ENCODE measurements at regions of chr17 and their contacts with region 1.

Region 1: GRCh38 chr17:19867064-19867313 is 747 bp downstream of the ULK2 start:
- DNase-seq: peak; percentile 71
- H3K4me3 ChIP-seq: peak overlapping the region; percentile 87 to 97 (median 95)
- H3K27ac ChIP-seq: peak overlapping the region; percentile 64
- H3K4me1 ChIP-seq: peaks cover 6% of the 10 kb centered on the region
- H3K27me3 ChIP-seq: no peaks in the 10 kb centered on the region
- CTCF ChIP-seq: peak; percentile 10 to 46
- POLR2A ChIP-seq: no peak

Region 2: GRCh38 chr17:19904924-19905323 is 37.9 kb after region 1 on chr17:
- CTCF ChIA-PET with region 1: no interaction called
- POLR2A ChIA-PET with region 1: no interaction called
- dilution Hi-C with region 1: no loop called
- intact Hi-C with region 1: loop called (anchors 5 kb)
- DNase-seq: no peak
- H3K4me3 ChIP-seq: no peak overlapping the region
- H3K27ac ChIP-seq: no peak overlapping the region
- H3K4me1 ChIP-seq: no peaks in the 10 kb centered on the region
- H3K27me3 ChIP-seq: no peaks in the 10 kb centered on the region
- CTCF ChIP-seq: no peak
- POLR2A ChIP-seq: no peak

Region 3: DNA sequence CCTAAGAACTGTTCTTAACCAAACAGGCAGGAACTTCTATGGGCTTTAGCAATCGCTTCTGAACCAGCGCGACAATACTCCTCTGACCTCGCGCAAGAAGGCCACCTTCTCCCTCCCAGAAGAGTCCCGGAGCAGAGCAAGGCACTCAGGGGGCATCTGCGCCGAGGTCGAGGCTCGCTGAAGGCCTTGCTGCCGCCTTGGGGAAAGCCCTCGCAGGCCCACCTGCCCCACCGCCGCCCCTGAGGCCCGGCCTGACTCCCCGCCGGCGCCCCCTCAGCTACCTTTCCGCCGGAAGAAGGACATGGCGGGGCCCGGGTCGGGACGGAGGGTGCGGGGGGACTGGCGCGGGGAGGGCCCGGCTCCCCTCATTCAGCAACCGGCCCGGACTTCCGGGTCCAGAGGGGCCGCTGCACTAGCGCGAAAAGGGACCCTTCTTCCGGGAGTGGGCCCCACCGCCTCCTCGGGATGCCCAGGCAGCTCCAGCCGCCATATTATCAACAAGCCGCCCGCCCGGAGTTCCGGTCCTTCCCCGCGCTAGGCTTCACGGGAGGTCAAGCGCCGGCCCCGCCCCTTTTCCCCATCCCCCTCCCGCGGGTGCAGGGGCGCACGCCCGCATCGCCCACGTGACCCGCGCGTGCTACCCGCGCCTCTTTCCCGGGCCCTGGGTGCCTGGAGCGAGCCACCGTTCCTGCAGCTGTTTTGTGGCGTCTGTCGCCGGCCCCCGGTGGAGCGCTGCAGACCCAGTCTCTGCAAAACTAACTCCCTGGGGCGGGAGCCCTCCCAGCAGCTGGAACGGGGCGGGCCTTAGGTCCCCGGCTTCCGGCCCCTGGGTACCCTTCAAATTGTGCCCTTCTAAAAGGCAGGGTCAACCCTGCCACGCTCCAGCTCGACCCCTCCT is 110.6 kb after region 1 on chr17 and contains the start of gene AKAP10:
- CTCF ChIA-PET with region 1: no interaction called
- POLR2A ChIA-PET with region 1: interaction called, 4 read pairs
- dilution Hi-C with region 1: no loop called
- intact Hi-C with region 1: loop called (anchors 10 kb)
- DNase-seq: peak; percentile 79
- H3K4me3 ChIP-seq: peak within 1 kb of the TSS; percentile 58 to 95 (median 82)
- H3K27ac ChIP-seq: peak within 1 kb of the TSS; percentile 70
- H3K4me1 ChIP-seq: peaks cover 7% of the 10 kb centered on the region
- H3K27me3 ChIP-seq: no peaks in the 10 kb centered on the region
- CTCF ChIP-seq: no peak
- POLR2A ChIP-seq: peak; percentile 84
- total RNA-seq, gene AKAP10: 25.3 and 27.1 TPM in 2 replicates

Measured in endothelial cell of umbilical vein (primary cell).